Colonic mucosa (tissue), 4 donors: ENCODE measurements at regions of chr7 and their contacts with region 1.

Region 1: GRCh38 chr7:31234836-31235605 is 105.5 kb downstream of the NEUROD6 start:
- DNase-seq: no peak
- H3K4me3 ChIP-seq: no peak overlapping the region
- H3K27ac ChIP-seq: no peak overlapping the region
- H3K4me1 ChIP-seq: no peaks in the 10 kb centered on the region
- H3K27me3 ChIP-seq: no peaks in the 10 kb centered on the region
- CTCF ChIP-seq: no peak

Region 2: DNA sequence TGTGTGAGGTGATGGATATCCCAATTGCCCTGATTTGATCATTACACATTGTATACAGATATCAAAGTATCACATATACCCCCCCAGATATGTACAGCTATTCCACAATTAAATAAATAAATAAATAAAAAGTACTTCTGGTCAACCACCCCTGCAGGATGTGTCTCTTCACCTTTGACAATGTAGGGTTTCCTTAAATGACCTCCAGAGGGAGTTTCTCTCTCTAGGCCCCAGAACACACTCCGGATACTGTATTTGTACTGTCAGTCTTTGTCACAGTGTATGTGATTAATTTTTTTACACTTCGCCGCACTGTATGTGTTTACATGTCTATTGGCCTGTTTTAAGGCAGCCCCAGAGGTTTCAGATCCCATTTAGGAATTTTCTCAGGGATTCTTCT is 59.3 kb before region 1 on chr7:
- intact Hi-C with region 1: loop called (anchors 10 kb)
- DNase-seq: no peak
- H3K4me3 ChIP-seq: no peak overlapping the region
- H3K27ac ChIP-seq: no peak overlapping the region
- H3K4me1 ChIP-seq: no peaks in the 10 kb centered on the region
- H3K27me3 ChIP-seq: no peaks in the 10 kb centered on the region
- CTCF ChIP-seq: no peak